ENCODE measurements at regions of chr3 and their contacts with region 1.

Region 1: GRCh38 chr3:38117748-38118420 is 19.0 kb downstream of the ACAA1 start:
- DNase-seq: peak; percentile 52 to 83 (median 72)
- ATAC-seq: peak; percentile 99
- H3K4me3 ChIP-seq: no peak overlapping the region
- H3K4me3 Mint-ChIP-seq: no peak overlapping the region
- H3K27ac ChIP-seq: no peak overlapping the region
- H3K27ac Mint-ChIP-seq: peak overlapping the region; percentile 8
- H3K4me1 ChIP-seq: peaks cover 6% of the 10 kb centered on the region
- H3K4me1 Mint-ChIP-seq: peaks cover 11% of the 10 kb centered on the region
- H3K27me3 ChIP-seq: no peaks in the 10 kb centered on the region
- H3K27me3 Mint-ChIP-seq: no peaks in the 10 kb centered on the region
- CTCF ChIP-seq: peak; percentile 82

Region 2: DNA sequence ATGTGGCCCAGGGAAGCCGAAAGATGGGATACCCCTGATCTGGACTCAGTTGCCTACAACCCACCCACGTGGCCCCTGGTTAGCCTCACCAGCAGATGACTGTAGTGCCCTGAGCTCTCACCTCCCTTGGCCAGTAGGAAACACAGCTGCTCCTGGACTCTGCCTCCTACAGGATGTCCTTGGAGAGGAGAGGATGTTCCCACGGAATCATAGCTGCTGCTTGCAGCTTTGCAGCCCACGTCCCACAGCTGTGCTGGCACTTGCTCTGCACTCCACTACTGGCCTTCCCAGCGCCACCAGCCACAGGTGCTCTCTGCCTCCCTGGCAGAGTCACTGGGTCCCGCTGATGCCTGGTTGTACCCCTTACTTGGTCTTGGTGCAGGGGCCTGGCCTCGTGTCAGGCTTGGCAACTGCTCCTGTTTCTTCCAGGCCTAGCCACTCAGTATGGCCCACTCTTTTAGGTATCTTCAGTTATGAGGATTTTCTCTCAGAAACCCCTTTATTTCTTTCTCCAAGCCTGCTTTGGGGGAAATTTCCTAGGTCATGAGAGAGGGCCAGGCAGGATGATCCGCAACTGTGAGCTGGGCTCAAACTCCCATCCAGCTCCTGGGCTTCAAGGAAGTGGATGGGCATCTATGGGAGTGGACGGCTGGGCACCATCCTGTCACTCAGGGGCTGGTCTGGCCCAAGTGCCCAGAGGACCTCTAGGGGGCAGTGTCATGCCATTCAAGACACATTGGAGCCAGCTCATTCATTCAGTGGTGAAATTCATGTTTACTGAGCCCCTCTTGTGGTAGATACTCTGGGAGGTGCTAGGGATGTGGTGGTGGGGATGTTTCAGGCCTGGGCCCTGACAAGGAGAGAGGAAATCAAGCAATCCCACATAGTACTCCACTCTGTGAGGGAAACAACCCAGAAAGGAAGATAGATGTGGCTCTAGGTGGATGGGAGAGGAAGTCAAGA is 143.5 kb before region 1 on chr3:
- CTCF ChIA-PET with region 1: no interaction called
- POLR2A ChIA-PET with region 1: no interaction called
- intact Hi-C with region 1: loop called in 1 of 2 experiments (anchors 5 kb)
- DNase-seq: peak; percentile 49 to 85 (median 62)
- ATAC-seq: peak; percentile 97
- H3K4me3 ChIP-seq: no peak overlapping the region
- H3K4me3 Mint-ChIP-seq: no peak overlapping the region
- H3K27ac ChIP-seq: no peak overlapping the region
- H3K27ac Mint-ChIP-seq: no peak overlapping the region
- H3K4me1 ChIP-seq: peaks cover 5% of the 10 kb centered on the region
- H3K4me1 Mint-ChIP-seq: peaks cover 4% of the 10 kb centered on the region
- H3K27me3 ChIP-seq: no peaks in the 10 kb centered on the region
- H3K27me3 Mint-ChIP-seq: no peaks in the 10 kb centered on the region
- CTCF ChIP-seq: peak; percentile 85

Region 3: DNA sequence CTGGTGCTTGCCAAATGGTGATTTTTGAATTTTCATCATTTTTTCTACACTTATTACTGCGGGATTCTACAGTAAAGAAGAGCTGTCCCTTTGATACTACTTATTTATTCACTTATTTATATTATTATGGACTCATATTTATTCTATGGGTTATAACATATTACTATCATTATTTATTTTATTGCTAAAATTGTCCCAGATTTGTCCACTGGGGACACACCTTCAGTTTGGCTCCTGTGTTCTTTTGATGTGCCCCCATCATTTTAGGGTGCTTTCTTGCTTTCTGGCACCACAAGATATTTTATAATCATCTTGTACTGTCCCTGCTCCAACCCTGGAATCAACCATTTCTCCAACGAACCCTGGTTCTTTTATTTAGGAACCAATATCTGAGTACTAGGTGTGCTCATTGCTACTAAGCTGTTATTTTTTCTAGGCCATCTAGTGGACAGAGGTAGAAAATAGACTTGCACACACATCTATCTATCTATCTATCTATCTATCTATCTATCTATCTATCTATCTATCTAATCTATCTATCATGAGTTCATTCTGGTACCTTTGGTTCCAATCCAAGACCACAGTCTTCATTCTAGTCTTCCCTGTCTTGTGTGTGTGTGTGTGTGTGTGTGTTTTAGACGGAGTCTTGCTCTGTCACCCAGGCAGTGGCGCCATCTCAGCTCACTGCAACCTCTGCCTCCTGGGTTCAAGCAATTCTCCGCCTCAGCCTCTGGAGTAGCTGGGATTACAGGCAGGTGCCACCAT is 180.2 kb after region 1 on chr3:
- CTCF ChIA-PET with region 1: interaction called, 3 read pairs
- POLR2A ChIA-PET with region 1: no interaction called
- intact Hi-C with region 1: loop called in 1 of 2 experiments (anchors 5 kb)
- DNase-seq: peak in 2 of 14 experiments; percentile 9 to 10
- ATAC-seq: no peak
- H3K4me3 ChIP-seq: no peak overlapping the region
- H3K4me3 Mint-ChIP-seq: no peak overlapping the region
- H3K27ac ChIP-seq: no peak overlapping the region
- H3K27ac Mint-ChIP-seq: no peak overlapping the region
- H3K4me1 ChIP-seq: no peaks in the 10 kb centered on the region
- H3K4me1 Mint-ChIP-seq: no peaks in the 10 kb centered on the region
- H3K27me3 ChIP-seq: peaks cover 0 to 2% of the 10 kb centered on the region in 2 experiments
- H3K27me3 Mint-ChIP-seq: no peaks in the 10 kb centered on the region
- CTCF ChIP-seq: peak; percentile 27

Region 4: DNA sequence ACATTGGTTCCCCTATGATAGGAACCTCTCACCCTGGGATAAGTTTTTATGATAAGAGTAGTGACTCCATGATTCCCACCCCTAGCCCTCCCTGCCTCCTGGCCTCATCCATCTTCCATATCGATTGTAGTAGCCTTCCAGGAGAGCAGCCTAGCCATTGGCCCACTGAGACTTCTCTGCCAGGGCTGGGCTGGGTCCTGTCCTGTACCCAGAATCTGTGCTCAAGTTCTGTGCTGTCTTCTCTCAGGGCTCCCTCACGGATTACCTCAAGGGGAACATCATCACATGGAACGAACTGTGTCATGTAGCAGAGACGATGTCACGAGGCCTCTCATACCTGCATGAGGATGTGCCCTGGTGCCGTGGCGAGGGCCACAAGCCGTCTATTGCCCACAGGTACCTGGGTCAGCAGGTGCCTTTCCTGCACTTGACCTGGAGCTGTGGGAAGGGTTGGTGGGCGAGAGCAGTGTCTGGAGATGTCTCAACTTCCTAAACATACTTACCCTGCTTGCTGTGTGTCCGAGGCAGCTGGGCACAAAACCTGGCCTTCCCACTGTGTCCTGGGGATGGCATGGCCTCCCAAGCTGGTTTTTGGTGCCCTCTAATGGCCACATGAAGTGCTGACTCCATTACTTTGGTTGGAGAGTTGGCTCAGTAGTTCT is 361.7 kb after region 1 on chr3:
- CTCF ChIA-PET with region 1: interaction called, 12 read pairs
- POLR2A ChIA-PET with region 1: no interaction called
- intact Hi-C with region 1: loop called (anchors 1 kb)
- DNase-seq: peak in 13 of 14 experiments; percentile 17 to 76 (median 38)
- ATAC-seq: peak; percentile 64
- H3K4me3 ChIP-seq: no peak overlapping the region
- H3K4me3 Mint-ChIP-seq: no peak overlapping the region
- H3K27ac ChIP-seq: no peak overlapping the region
- H3K27ac Mint-ChIP-seq: no peak overlapping the region
- H3K4me1 ChIP-seq: peaks cover 3% of the 10 kb centered on the region
- H3K4me1 Mint-ChIP-seq: peaks cover 9% of the 10 kb centered on the region
- H3K27me3 ChIP-seq: no peaks in the 10 kb centered on the region
- H3K27me3 Mint-ChIP-seq: no peaks in the 10 kb centered on the region
- CTCF ChIP-seq: peak; percentile 94